ENCODE measurements at regions of chr21 and their contacts with region 1.

Region 1: DNA sequence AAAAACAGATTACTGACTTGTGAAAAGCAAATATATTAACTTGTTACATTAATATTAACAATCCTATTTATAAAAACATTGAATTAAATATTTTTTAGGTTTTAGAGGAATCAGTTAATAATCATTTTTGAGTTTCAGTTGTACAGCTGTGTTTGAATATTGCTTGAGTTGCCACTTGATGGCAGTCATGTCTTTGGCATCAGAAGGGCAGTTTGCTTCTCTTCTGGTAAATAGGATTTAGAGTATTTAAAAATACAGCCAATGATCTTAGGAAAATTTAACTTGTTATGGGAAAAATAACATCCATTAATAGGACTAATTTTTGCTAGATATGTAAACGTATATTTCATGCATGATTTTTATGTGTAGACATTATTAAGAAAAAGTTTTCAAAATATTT is 234.1 kb downstream of the NCAM2 start:
- DNase-seq: peak; percentile 53
- H3K4me3 Mint-ChIP-seq: no peak overlapping the region
- H3K27ac Mint-ChIP-seq: no peak overlapping the region
- H3K4me1 Mint-ChIP-seq: no peaks in the 10 kb centered on the region
- H3K27me3 Mint-ChIP-seq: no peaks in the 10 kb centered on the region
- CTCF ChIP-seq: peak; percentile 57

Region 2: GRCh38 chr21:20999659-21000058 is 232.7 kb before region 1 on chr21:
- CTCF ChIA-PET with region 1: no interaction called
- POLR2A ChIA-PET with region 1: no interaction called
- intact Hi-C with region 1: loop called (anchors 1 kb)
- DNase-seq: peak; percentile 48
- H3K4me3 Mint-ChIP-seq: no peak overlapping the region
- H3K27ac Mint-ChIP-seq: no peak overlapping the region
- H3K4me1 Mint-ChIP-seq: peaks cover 5% of the 10 kb centered on the region
- H3K27me3 Mint-ChIP-seq: no peaks in the 10 kb centered on the region
- CTCF ChIP-seq: peak; percentile 69

Region 3: DNA sequence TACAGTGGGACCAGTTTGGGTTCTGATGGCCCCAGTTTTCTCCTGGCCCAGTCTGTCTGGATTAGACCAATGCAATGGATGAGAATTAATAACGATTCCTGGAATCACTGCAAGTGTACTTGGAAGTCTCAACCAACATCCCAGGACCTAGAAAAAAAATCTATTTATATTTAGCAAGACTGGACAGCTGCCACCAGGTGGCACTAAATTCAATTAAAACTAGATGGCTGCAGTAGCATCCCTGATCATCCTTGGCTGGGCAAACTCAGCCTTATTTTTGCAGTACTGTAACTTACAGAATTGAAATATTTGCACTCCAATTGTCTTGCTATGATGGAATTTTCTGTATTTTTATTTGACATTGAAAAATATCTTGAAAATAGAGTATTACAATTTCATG is 68.4 kb before region 1 on chr21:
- CTCF ChIA-PET with region 1: no interaction called
- POLR2A ChIA-PET with region 1: no interaction called
- intact Hi-C with region 1: loop called (anchors 10 kb)
- DNase-seq: peak; percentile 70
- H3K4me3 Mint-ChIP-seq: no peak overlapping the region
- H3K27ac Mint-ChIP-seq: no peak overlapping the region
- H3K4me1 Mint-ChIP-seq: no peaks in the 10 kb centered on the region
- H3K27me3 Mint-ChIP-seq: no peaks in the 10 kb centered on the region
- CTCF ChIP-seq: peak; percentile 48

Region 4: DNA sequence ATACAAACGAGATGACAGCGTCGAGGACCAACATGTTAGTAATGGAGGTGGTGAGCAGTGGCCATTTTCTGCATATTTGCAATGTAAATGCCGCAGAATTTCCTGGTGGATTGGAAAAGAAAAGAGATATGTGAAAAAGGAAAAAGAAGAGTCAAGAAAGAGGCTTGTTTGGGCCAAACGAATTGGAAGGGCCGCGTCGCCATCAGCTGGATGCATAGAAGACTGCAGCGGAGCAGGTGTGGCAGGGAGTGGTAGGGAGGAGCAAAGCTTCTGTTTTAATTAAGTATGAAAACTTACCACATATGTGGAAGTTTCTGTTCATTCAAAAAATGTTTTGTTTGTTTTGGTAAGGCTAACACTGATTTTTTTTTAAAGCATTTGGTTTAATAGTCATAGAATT is 456.6 kb after region 1 on chr21:
- CTCF ChIA-PET with region 1: no interaction called
- POLR2A ChIA-PET with region 1: no interaction called
- intact Hi-C with region 1: loop called (anchors 5 kb)
- DNase-seq: peak; percentile 48
- H3K4me3 Mint-ChIP-seq: no peak overlapping the region
- H3K27ac Mint-ChIP-seq: no peak overlapping the region
- H3K4me1 Mint-ChIP-seq: no peaks in the 10 kb centered on the region
- H3K27me3 Mint-ChIP-seq: no peaks in the 10 kb centered on the region
- CTCF ChIP-seq: no peak